RWPE1 (cell line): ENCODE measurements at regions of chr2 and their contacts with region 1.

Region 1: DNA sequence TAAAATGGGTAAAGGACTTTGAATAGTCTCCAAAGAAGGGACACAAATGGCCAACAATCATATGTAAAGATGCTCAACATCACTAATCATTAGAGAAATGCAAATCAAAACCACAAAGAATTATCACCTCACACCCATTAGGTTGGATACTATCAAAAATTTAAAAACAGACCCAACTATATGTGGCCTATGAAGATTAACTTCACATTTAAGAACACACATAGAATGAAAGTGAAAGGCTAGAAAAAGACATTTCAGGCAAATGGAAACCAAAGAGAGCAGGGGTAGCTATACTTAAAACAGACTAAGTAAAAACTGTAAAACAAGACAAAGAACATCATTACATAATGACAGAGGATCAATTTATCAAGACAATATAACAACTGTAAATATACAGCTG is 53.5 kb upstream of the ASPRV1 start:
- DNase-seq: no peak
- H3K27ac ChIP-seq: no peak overlapping the region
- CTCF ChIP-seq: no peak

Region 2: GRCh38 chr2:70070541-70071268 is 55.7 kb after region 1 on chr2:
- CTCF ChIA-PET with region 1: interaction called, 12 read pairs
- POLR2A ChIA-PET with region 1: no interaction called
- DNase-seq: peak; percentile 86
- H3K27ac ChIP-seq: peak overlapping the region; percentile 44
- CTCF ChIP-seq: peak; percentile 91